OCI-LY7 (cell line): ENCODE measurements at regions of chr5 and their contacts with region 1.

Region 1: GRCh38 chr5:157743163-157744050 is at the start of gene LSM11:
- DNase-seq: peak; percentile 91
- H3K4me3 ChIP-seq: peak within 1 kb of the TSS; percentile 98
- H3K27ac ChIP-seq: no peak within 1 kb of the TSS
- H3K4me1 ChIP-seq: peaks cover 22% of the 10 kb centered on the region
- CTCF ChIP-seq: peak; percentile 98
- total RNA-seq, gene LSM11: 7.5 and 8.8 TPM in 2 replicates

Region 2: DNA sequence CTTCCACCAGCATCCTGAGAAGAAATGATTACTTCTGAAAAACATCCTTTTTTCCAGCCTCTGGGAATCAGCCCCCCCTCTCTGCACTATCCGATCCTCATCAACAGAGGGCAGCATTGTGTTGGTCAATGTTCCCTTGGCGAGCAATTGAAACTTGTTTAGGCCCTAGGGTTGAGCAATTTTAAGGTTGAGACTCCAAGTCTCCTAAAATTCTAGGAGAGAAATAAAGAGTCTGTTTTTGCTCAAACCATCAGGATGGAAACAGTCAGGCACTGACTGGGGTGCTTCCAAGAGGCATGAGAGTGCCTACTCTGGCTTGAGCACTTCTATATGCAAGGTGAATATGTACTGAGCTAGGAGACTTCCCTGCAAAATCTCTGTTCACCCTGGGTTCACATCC is 489.9 kb before region 1 on chr5:
- CTCF ChIA-PET with region 1: interaction called, 3 read pairs
- POLR2A ChIA-PET with region 1: no interaction called
- intact Hi-C with region 1: loop called (anchors 1 kb)
- DNase-seq: peak; percentile 71
- H3K4me3 ChIP-seq: peak overlapping the region; percentile 7
- H3K27ac ChIP-seq: peak overlapping the region; percentile 16
- H3K4me1 ChIP-seq: peaks cover 10% of the 10 kb centered on the region
- CTCF ChIP-seq: peak; percentile 99

Region 3: GRCh38 chr5:157431544-157432200 is 311.7 kb before region 1 on chr5:
- CTCF ChIA-PET with region 1: interaction called, 11 read pairs
- POLR2A ChIA-PET with region 1: interaction called, 6 read pairs
- intact Hi-C with region 1: loop called (anchors 1 kb)
- DNase-seq: peak; percentile 82
- H3K4me3 ChIP-seq: no peak overlapping the region
- H3K27ac ChIP-seq: no peak overlapping the region
- H3K4me1 ChIP-seq: peaks cover 9% of the 10 kb centered on the region
- CTCF ChIP-seq: peak; percentile 87

Region 4: DNA sequence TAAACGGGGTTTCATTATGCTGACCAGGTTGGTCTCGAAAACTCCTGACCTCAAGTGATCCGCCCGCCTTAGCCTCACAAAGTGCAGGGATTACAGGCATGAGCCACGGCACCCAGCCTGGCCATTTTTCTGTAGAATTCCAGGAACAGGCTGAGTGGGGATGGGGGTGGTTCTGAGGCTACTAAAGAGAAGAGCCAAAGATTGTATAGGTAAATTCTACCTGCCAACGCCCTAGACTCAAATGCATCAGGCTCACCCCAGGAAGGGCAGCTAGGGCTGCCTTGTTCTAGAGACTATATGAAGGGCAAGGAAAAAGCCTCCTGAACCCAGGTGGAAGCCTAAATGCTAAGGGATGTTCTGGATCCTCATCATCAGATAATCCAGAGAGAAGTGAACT is 73.7 kb before region 1 on chr5:
- CTCF ChIA-PET with region 1: interaction called, 4 read pairs
- POLR2A ChIA-PET with region 1: interaction called, 3 read pairs
- intact Hi-C with region 1: loop called (anchors 1 kb)
- DNase-seq: no peak
- H3K4me3 ChIP-seq: no peak overlapping the region
- H3K27ac ChIP-seq: no peak overlapping the region
- H3K4me1 ChIP-seq: peaks cover 9% of the 10 kb centered on the region
- CTCF ChIP-seq: no peak

Region 5: DNA sequence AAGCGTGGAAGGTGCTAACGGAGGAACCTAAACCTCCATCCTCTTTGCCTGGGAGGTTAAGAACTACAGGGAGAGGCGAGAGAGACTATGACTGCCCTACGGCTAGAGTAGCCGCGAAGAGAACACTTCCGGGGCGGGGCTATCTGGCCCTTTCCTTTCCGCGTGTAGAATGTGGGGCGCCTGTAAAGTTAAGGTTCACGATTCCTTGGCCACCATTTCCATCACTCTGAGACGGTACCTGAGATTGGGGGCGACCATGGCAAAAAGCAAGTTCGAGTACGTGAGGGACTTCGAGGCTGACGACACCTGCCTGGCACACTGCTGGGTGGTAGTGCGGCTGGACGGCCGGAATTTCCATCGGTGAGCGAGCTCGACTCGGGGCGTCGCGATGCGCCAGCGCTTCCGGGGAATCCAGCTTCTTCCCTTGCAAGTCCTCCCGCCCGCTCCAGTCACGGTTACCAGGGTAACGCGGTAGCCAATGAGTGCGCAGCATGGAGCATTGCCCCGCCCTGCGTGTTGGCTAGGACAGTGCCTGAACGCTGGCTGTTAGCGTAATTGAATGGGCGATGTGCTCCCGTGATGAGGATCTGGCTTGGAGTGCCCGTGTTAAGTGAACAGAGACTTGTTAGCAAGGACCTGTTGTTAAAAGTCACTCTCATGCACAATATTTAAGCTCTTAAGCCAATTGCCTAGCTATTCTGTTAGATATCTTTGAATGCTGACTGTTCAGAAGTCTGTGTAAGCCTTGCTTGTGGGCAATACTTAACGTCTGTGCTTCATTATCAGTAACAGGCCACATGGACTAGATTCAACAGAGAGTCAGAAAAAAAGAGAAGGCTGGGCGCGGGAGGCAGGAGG is 11.9 kb before region 1 on chr5 and contains the start of gene THG1L:
- CTCF ChIA-PET with region 1: interaction called, 15 read pairs
- POLR2A ChIA-PET with region 1: interaction called, 31 read pairs
- intact Hi-C with region 1: no loop called
- DNase-seq: peak; percentile 96
- H3K4me3 ChIP-seq: peak within 1 kb of the TSS; percentile 75
- H3K27ac ChIP-seq: peak within 1 kb of the TSS; percentile 88
- H3K4me1 ChIP-seq: peaks cover 30% of the 10 kb centered on the region
- CTCF ChIP-seq: no peak
- total RNA-seq, gene THG1L: 20.7 and 30.5 TPM in 2 replicates

Region 6: DNA sequence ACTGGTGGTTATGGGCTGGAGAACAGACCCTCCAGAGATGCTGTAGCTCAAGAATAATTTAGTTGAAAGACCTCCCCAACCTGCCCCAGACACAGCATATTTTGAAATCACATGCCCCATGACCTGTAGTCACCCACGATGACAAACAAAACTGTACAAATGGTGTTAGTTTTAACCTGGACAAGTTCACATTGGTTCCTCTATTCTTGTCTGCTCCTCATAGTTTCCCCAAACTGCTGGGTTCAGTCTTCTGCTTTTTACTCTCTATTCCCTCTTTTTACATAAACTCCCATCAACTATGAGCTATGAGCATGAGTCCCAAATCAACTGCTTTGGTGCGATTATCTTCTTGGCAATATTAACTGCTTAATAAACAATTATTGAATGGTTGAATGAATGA is 480.8 kb after region 1 on chr5:
- CTCF ChIA-PET with region 1: no interaction called
- POLR2A ChIA-PET with region 1: no interaction called
- intact Hi-C with region 1: no loop called
- DNase-seq: no peak
- H3K4me3 ChIP-seq: no peak overlapping the region
- H3K27ac ChIP-seq: no peak overlapping the region
- H3K4me1 ChIP-seq: no peaks in the 10 kb centered on the region
- CTCF ChIP-seq: no peak